ENCODE measurements at regions of chr13 and their contacts with region 1.

Region 1: DNA sequence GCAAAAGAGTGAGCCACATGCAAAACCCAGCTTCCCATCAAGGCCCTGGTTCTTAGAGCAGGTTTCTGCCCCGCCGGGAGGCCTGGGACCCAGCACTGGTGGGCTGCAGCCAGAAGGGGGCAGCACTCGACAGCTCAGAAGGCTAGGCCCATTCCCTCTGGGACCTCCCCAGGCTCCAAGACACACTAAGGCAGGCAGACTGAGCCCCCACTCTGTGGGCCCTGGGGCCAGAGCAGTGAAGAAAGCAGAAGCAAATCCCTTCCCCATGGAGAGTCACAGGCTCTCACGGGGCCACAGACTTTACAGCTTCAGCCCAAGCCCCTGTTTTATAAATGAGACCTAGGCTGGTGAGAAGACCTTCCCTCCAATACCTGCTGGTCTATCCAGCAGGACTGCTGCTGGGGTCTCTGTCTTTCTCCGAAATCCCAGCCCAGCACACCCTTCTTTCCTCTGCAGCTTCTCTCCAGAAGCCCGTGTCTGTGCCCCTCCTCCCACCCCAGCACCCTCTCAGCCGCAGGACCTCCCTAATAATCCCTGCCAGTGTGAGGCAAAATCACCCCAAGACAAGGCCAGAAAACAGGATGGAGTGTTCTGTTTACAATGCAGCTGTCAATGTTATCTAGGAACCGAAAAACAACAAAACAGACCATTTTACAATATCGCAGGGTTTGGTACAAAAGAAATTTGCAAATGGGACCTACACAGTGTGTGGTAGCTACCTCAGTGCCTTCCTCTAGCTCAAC is 109.3 kb downstream of the ABCC4 start:
- DNase-seq: peak; percentile 76
- CTCF ChIP-seq: peak; percentile 98

Region 2: GRCh38 chr13:95301183-95301967 is 109.4 kb after region 1 on chr13 and contains the start of gene ABCC4:
- in situ Hi-C with region 1: loop called (anchors 10 kb)
- DNase-seq: peak; percentile 92
- CTCF ChIP-seq: no peak

Region 3: GRCh38 chr13:95387733-95388207 is 195.8 kb after region 1 on chr13:
- in situ Hi-C with region 1: loop called (anchors 5 kb)
- DNase-seq: no peak
- CTCF ChIP-seq: no peak

Region 4: DNA sequence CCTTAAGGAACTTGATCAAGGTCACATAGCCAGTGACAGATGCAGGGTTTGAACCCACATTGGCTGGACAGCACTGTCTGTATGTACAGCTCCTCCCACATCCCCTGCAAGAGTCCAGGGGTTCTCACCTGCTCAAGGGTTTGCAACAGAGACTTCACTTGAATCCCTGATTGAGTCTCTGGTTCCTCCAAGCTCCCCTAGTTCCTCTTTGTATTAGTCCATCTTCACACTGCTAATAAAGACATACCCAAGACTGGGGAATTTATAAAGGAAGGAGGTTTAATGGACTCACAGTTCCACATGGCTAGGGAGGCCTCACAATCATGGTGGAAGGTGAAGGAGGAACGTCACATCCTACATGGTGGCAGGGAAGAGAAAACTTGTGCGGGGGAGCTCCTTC is 287.7 kb after region 1 on chr13:
- in situ Hi-C with region 1: loop called (anchors 10 kb)
- DNase-seq: no peak
- CTCF ChIP-seq: no peak